ENCODE measurements at regions of chr11 and their contacts with region 1.

Region 1: DNA sequence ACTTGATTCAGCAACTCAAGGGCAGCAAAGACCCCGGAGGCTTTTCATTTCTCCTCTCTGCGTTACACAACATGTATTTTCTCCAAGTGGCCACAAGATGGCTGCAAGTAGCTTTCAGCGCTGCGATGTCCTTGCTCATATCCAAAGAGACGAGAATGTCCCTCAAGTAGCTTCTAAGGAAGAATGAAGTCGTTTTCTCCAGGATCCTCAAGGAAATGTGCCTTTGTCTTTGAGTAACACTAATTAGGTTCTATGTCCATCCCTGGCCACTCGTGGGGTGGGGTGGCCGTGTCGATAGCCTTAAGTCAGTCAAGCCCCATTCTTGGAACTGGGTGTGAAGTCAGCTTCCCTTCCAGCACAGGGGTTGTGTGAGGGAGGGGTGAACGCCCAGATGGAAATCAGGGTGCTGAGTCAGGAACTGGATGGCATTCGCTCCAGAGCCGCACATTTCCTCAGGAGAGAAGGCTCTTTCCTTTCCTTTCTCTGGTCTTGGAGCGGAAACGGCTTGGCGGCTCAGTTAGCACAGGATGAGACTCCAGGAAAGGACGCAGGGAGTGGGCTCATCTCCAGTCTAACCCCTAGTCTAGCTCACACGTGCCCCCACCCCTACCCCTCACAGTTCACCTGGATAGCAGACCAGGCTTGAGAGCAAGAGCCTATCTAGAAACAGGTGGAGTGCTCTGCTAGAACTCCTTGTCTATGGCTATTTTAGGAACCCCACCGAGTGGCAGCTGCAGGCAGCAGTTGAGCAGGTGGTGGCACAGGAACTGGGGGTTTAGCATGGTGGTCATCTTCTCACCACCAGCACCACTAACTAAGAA is 44.3 kb downstream of the NNMT start:
- DNase-seq: peak; percentile 39
- H3K4me3 ChIP-seq: peak overlapping the region in 1 of 2 experiments; percentile 53; a peak in 2 of 4 replicates
- H3K27ac ChIP-seq: no peak overlapping the region; a peak in 1 of 4 replicates
- H3K4me1 ChIP-seq: peaks cover 0 to 4% of the 10 kb centered on the region in 2 experiments; a peak in 1 of 4 replicates
- H3K27me3 ChIP-seq: no peaks in the 10 kb centered on the region
- CTCF ChIP-seq: peak; percentile 90
- EP300 ChIP-seq: no peak
- RAD21 ChIP-seq: peak; percentile 91

Region 2: GRCh38 chr11:114228435-114229411 is 111.8 kb before region 1 on chr11:
- CTCF ChIA-PET with region 1: no interaction called
- POLR2A ChIA-PET with region 1: no interaction called
- DNase-seq: peak; percentile 73
- H3K4me3 ChIP-seq: no peak overlapping the region
- H3K27ac ChIP-seq: no peak overlapping the region
- H3K4me1 ChIP-seq: peaks cover 0 to 6% of the 10 kb centered on the region in 2 experiments; a peak in 1 of 4 replicates
- H3K27me3 ChIP-seq: peaks cover 47% of the 10 kb centered on the region; the same call in 1 of the 2 replicates
- CTCF ChIP-seq: no peak
- EP300 ChIP-seq: 0 out of 4 replicates have a peak, but pooled peaks of 1 of the 2 experiments have one; percentile 8
- RAD21 ChIP-seq: no peak

Region 3: GRCh38 chr11:114280696-114281095 is 59.8 kb before region 1 on chr11:
- CTCF ChIA-PET with region 1: interaction called, 11 read pairs
- POLR2A ChIA-PET with region 1: no interaction called
- DNase-seq: peak; percentile 76
- H3K4me3 ChIP-seq: no peak overlapping the region
- H3K27ac ChIP-seq: no peak overlapping the region
- H3K4me1 ChIP-seq: peaks cover 0 to 7% of the 10 kb centered on the region in 2 experiments; a peak in 2 of 4 replicates
- H3K27me3 ChIP-seq: peaks cover 8% of the 10 kb centered on the region; the same call in 1 of the 2 replicates
- CTCF ChIP-seq: peak; percentile 77
- EP300 ChIP-seq: no peak
- RAD21 ChIP-seq: peak; percentile 92

Region 4: GRCh38 chr11:114318361-114318760 is 22.2 kb before region 1 on chr11:
- CTCF ChIA-PET with region 1: interaction called, 11 read pairs
- POLR2A ChIA-PET with region 1: no interaction called
- DNase-seq: no peak
- H3K4me3 ChIP-seq: no peak overlapping the region
- H3K27ac ChIP-seq: no peak overlapping the region
- H3K4me1 ChIP-seq: 0 out of 4 replicates have a peak, but pooled peaks cover 0 to 4% of the 10 kb centered on the region in 2 experiments
- H3K27me3 ChIP-seq: no peaks in the 10 kb centered on the region
- CTCF ChIP-seq: no peak
- EP300 ChIP-seq: no peak
- RAD21 ChIP-seq: no peak

Region 5: GRCh38 chr11:114762408-114762807 is 421.9 kb after region 1 on chr11:
- CTCF ChIA-PET with region 1: interaction called, 20 read pairs
- POLR2A ChIA-PET with region 1: interaction called, 3 read pairs
- DNase-seq: peak; percentile 77
- H3K4me3 ChIP-seq: no peak overlapping the region; a peak in 1 of 4 replicates
- H3K27ac ChIP-seq: no peak overlapping the region
- H3K4me1 ChIP-seq: peaks cover 0 to 4% of the 10 kb centered on the region in 2 experiments; a peak in 1 of 4 replicates
- H3K27me3 ChIP-seq: no peaks in the 10 kb centered on the region
- CTCF ChIP-seq: peak; percentile 62
- EP300 ChIP-seq: 0 out of 4 replicates have a peak, but pooled peaks of 1 of the 2 experiments have one; percentile 10
- RAD21 ChIP-seq: peak; percentile 88

Measured in SK-N-SH (cell line).